MCF 10A (cell line): ENCODE measurements at regions of chr10 and their contacts with region 1.

Region 1: DNA sequence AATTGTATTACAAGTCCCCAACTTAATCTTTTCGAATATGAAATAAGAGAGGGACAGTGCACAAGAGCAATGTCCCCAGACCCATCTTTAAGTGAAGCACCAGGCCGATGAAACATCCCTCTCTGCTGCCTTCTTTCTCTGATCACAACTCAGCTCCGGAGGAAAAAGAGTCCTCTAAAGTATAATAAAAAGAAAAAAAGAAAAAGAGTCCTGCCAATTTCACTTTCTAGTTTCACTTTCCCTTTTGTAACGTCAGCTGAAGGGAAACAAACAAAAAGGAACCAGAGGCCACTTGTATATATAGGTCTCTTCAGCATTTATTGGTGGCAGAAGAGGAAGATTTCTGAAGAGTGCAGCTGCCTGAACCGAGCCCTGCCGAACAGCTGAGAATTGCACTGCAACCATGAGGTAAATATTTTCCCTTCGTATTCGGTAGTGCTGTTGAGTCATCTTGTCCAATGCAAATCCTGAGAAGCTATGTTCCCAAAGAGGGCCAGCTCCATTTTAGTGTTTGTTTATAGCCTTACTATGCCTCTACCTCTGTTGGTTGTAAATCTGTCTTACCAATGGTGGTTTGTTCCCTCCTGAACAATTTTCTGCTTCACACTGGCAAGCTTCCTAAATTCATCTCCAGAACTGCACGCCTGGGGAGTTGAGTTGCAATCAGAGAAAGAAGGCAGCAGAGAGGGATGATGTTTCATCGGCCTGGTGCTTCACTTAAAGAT is at the start of gene IFIT2:
- DNase-seq: peak; percentile 69
- H3K4me3 Mint-ChIP-seq: peak within 1 kb of the TSS; percentile 73
- H3K27ac Mint-ChIP-seq: peak within 1 kb of the TSS; percentile 90
- H3K4me1 Mint-ChIP-seq: peaks cover 15% of the 10 kb centered on the region
- H3K27me3 Mint-ChIP-seq: no peaks in the 10 kb centered on the region
- CTCF ChIP-seq: no peak
- total RNA-seq, gene IFIT2: 0.58 and 1.3 TPM in 2 replicates

Region 2: GRCh38 chr10:89207181-89207800 is 94.6 kb before region 1 on chr10 and contains the start of gene CH25H:
- CTCF ChIA-PET with region 1: no interaction called
- POLR2A ChIA-PET with region 1: no interaction called
- intact Hi-C with region 1: no loop called
- DNase-seq: peak; percentile 69
- H3K4me3 Mint-ChIP-seq: peak within 1 kb of the TSS; percentile 62
- H3K27ac Mint-ChIP-seq: no peak within 1 kb of the TSS
- H3K4me1 Mint-ChIP-seq: peaks cover 6% of the 10 kb centered on the region
- H3K27me3 Mint-ChIP-seq: no peaks in the 10 kb centered on the region
- CTCF ChIP-seq: no peak
- total RNA-seq, gene CH25H: not detected in 2 replicates

Region 3: DNA sequence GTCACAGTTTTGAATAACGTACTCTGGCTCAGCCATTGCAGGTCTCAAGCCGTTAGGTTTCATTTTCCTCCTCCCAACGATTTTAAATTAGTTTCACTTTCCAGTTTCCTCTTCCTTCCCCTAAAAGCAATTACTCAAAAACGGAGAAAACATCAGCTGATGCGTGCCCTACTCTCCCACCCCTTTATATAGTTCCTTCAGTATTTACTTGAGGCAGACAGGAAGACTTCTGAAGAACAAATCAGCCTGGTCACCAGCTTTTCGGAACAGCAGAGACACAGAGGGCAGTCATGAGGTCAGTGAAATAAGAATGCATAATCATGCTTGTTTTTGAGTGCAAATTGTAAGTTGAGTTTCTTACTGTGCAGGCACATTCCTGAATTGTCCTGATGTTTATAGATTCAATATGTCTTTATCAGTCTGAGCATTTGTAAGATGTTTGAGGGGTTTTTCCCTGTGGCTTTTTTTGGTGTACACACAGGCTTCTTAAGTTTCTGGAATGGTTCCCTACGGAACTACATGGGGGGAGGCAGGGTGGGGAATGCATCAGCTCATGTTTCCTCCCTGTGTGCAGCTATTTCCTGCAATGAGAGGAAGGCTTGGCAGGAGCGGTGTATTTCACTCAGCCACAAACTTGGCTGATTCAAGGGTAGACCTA is 26.0 kb after region 1 on chr10 and contains the start of gene IFIT3:
- CTCF ChIA-PET with region 1: interaction called, 4 read pairs
- POLR2A ChIA-PET with region 1: interaction called, 42 read pairs
- intact Hi-C with region 1: no loop called
- DNase-seq: peak; percentile 87
- H3K4me3 Mint-ChIP-seq: peak within 1 kb of the TSS; percentile 74
- H3K27ac Mint-ChIP-seq: peak within 1 kb of the TSS; percentile 95
- H3K4me1 Mint-ChIP-seq: peaks cover 19% of the 10 kb centered on the region
- H3K27me3 Mint-ChIP-seq: no peaks in the 10 kb centered on the region
- CTCF ChIP-seq: no peak
- total RNA-seq, gene IFIT3: 1.4 and 3.6 TPM in 2 replicates

Region 4: DNA sequence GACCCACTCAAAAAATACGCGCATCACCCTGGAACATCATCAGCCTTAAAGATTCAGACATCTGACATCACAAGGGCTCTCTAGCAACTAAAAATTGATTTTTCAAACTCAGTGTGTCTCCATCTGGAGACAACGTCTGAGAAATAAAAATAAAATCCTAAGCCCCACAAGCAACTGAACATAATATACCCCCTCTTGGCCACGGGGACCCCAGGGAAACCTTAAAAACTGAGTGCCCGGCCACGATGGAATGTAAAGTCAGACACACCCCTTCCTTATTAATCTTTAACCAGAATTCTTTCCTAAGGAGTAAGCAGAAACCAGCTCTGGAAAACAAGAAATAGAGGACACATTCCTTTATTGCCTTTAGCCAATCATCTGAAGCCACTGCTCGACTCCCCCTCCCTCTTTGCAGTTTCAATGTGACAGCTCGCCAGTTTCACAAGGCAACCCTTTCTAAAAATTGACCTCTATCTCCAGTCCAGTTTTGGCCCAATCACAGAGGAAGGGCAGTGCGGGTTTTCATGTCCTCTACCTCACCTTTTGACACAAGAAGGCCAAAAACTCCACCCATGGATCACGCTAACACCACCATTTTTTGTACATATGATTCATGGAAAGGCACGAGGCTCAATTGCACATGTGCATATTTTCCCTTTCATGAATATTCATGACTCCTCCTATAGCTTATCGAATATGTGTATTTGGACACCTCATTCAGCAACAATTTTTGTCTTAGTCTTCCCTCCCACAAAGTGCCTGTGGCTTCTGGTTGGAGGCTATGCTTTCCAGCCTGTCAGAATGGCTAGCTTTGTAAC is 50.1 kb after region 1 on chr10:
- CTCF ChIA-PET with region 1: no interaction called
- POLR2A ChIA-PET with region 1: interaction called, 26 read pairs
- intact Hi-C with region 1: loop called (anchors 2 kb)
- DNase-seq: peak; percentile 82
- H3K4me3 Mint-ChIP-seq: peak overlapping the region; percentile 66
- H3K27ac Mint-ChIP-seq: peak overlapping the region; percentile 98
- H3K4me1 Mint-ChIP-seq: peaks cover 30% of the 10 kb centered on the region
- H3K27me3 Mint-ChIP-seq: no peaks in the 10 kb centered on the region
- CTCF ChIP-seq: no peak

Region 5: DNA sequence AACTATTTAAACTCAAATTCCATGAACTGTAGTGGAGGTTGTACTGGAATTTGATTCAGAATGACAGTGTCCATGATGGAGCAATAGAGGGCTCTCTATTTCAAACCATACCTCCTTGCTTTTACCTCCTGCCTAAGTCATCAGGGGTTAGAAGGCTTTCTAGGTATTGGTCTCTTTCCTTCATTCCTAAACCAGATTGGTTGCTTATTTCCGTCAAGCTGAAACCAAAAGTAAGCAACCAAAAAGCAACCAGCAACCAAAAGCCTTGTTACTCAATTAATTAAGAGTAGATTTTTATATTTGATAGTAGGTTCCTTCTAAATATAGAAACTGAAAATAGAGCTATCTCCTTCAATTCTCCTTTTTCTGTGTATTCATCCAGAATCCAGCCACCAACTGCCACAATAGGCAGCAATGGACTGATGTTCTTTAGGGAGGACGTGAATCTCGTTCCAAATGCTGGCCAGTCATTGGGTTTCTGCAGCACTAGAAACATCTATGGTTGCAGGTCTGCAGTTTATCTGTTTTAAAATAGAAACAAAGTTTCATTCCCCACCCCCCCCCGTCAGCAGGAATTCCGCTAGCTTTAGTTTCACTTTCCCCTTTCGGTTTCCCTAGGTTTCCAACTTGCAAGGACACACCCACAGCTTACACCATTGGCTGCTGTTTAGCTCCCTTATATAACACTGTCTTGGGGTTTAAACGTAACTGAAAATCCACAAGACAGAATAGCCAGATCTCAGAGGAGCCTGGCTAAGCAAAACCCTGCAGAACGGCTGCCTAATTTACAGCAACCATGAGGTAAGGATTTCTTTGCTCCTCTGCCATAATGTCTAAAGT is 90.3 kb after region 1 on chr10 and contains the start of gene IFIT1:
- CTCF ChIA-PET with region 1: interaction called, 7 read pairs
- POLR2A ChIA-PET with region 1: interaction called, 15 read pairs
- intact Hi-C with region 1: no loop called
- DNase-seq: peak; percentile 85
- H3K4me3 Mint-ChIP-seq: peak within 1 kb of the TSS; percentile 77
- H3K27ac Mint-ChIP-seq: peak within 1 kb of the TSS; percentile 68
- H3K4me1 Mint-ChIP-seq: no peaks in the 10 kb centered on the region
- H3K27me3 Mint-ChIP-seq: no peaks in the 10 kb centered on the region
- CTCF ChIP-seq: no peak
- total RNA-seq, gene IFIT1: 0.17 and 0.26 TPM in 2 replicates

Region 6: DNA sequence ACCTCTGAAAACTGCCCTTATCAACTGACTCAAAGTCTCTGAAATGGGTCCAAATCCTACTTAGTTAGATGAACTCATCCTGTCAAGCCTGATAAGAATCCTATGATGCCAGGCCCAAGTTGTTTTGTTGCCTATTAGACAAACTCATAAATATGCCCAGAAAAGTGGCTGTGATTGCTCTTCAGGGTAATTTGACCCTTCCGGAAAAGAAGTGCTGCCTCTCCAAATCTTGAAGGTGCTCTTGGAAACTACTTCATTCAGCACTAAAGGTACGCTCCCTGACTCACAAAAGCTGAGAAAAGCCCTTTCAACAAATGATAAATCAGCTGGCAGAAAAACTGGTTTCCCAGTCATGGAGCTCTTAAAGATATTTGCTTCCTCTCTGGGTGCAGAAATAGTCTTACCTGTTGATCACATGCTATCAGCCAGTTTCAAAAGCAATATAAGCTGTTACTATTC is 119.2 kb after region 1 on chr10:
- CTCF ChIA-PET with region 1: no interaction called
- POLR2A ChIA-PET with region 1: no interaction called
- intact Hi-C with region 1: no loop called
- DNase-seq: no peak
- H3K4me3 Mint-ChIP-seq: no peak overlapping the region
- H3K27ac Mint-ChIP-seq: no peak overlapping the region
- H3K4me1 Mint-ChIP-seq: peaks cover 8% of the 10 kb centered on the region
- H3K27me3 Mint-ChIP-seq: no peaks in the 10 kb centered on the region
- CTCF ChIP-seq: no peak